Heart right ventricle (tissue), 16 donors: ENCODE measurements at regions of chr17 and their contacts with region 1.

Region 1: GRCh38 chr17:33779225-33779591 is 475.9 kb upstream of the CCL2 start:
- DNase-seq: peak in 1 of 2 donors; percentile 34
- ATAC-seq: no peak
- H3K4me3 ChIP-seq: no peak overlapping the region
- H3K27ac ChIP-seq: no peak overlapping the region
- H3K4me1 ChIP-seq: no peaks in the 10 kb centered on the region
- H3K27me3 ChIP-seq: peaks cover 0 to 55% (median 21%) of the 10 kb centered on the region in 7 donors
- CTCF ChIP-seq: peak; percentile 90 to 98 (median 94)

Region 2: DNA sequence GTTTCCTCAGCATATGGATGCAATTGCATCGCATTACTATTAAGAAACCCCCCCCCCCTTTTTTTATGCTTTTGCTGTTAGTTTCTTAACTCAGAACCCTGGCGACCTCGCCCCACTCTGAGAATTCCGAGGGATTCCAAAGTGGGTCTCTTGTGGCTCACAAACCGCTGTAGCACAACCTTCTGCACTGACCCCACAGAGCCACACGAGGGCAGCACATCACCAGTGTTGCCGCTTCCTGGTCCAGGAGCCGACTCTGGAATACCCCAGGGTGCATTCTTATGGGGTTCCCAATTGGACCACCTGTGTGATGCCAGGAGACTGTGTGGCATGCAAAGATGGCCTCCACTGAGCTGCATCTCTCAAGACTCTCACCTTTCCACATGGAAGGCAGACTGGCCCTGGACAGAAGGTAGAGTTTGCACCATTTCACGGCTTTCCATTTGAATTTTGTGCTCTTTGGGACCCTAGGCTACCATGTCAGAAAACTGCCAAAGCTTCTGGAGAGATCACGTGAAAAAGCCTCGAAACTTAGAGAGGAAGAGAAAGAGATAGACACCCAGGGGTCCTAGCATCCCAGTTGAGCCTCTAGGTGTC is 53.4 kb before region 1 on chr17:
- intact Hi-C with region 1: no loop called
- DNase-seq: peak; percentile 10 to 29
- ATAC-seq: peak in 1 of 8 donors; percentile 17
- H3K4me3 ChIP-seq: no peak overlapping the region
- H3K27ac ChIP-seq: no peak overlapping the region
- H3K4me1 ChIP-seq: no peaks in the 10 kb centered on the region
- H3K27me3 ChIP-seq: peaks cover 0 to 65% (median 37%) of the 10 kb centered on the region in 7 donors
- CTCF ChIP-seq: peak; percentile 15 to 67 (median 58)

Region 3: GRCh38 chr17:33927732-33928133 is 148.5 kb after region 1 on chr17:
- intact Hi-C with region 1: loop called in 1 of 10 experiments (anchors 10 kb)
- DNase-seq: no peak
- ATAC-seq: peak in 1 of 8 donors; percentile 49
- H3K4me3 ChIP-seq: no peak overlapping the region
- H3K27ac ChIP-seq: no peak overlapping the region
- H3K4me1 ChIP-seq: no peaks in the 10 kb centered on the region
- H3K27me3 ChIP-seq: peaks cover 0 to 60% (median 32%) of the 10 kb centered on the region in 7 donors
- CTCF ChIP-seq: peak in 7 of 9 donors; percentile 19 to 60 (median 52)

Region 4: GRCh38 chr17:33940769-33941370 is 161.7 kb after region 1 on chr17:
- intact Hi-C with region 1: no loop called
- DNase-seq: peak; percentile 5 to 47
- ATAC-seq: peak in 6 of 8 donors; percentile 64 to 82 (median 74)
- H3K4me3 ChIP-seq: no peak overlapping the region
- H3K27ac ChIP-seq: no peak overlapping the region
- H3K4me1 ChIP-seq: peaks cover 0 to 22% (median 0%) of the 10 kb centered on the region in 9 donors
- H3K27me3 ChIP-seq: peaks cover 0 to 6% (median 0%) of the 10 kb centered on the region in 7 donors
- CTCF ChIP-seq: no peak

Region 5: DNA sequence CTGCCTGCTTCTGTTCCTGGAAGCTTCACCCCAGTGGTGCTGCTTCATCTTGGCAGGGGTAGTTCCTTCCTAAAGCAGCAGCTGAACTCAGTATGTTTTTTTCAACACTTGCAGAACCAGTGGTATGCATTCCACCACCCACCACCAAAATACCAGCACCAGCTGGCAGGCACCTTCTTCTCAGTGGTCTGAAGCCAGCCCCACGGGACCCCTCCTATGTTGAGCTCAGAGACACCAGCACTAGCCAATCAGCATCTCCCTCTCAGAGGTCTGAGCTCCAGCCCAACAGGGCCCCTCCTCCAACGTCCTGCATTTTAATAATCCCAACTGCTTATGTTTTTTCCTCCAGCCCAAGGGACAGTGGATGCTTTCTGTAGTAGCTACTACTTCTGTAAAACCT is 176.3 kb after region 1 on chr17:
- intact Hi-C with region 1: no loop called
- DNase-seq: no peak
- ATAC-seq: no peak
- H3K4me3 ChIP-seq: no peak overlapping the region
- H3K27ac ChIP-seq: no peak overlapping the region
- H3K4me1 ChIP-seq: no peaks in the 10 kb centered on the region
- H3K27me3 ChIP-seq: peaks cover 0 to 9% (median 5%) of the 10 kb centered on the region in 7 donors
- CTCF ChIP-seq: no peak